ENCODE measurements at regions of chr5 and their contacts with region 1.

Region 1: GRCh38 chr5:56060271-56061110 is 65.7 kb upstream of the IL6ST start:
- DNase-seq: no peak
- ATAC-seq: no peak
- H3K4me3 ChIP-seq: no peak overlapping the region
- H3K27ac ChIP-seq: no peak overlapping the region
- H3K4me1 ChIP-seq: peaks cover 18% of the 10 kb centered on the region
- CTCF ChIP-seq: no peak
- EP300 ChIP-seq: no peak
- POLR2A ChIP-seq: no peak
- RAD21 ChIP-seq: no peak

Region 2: DNA sequence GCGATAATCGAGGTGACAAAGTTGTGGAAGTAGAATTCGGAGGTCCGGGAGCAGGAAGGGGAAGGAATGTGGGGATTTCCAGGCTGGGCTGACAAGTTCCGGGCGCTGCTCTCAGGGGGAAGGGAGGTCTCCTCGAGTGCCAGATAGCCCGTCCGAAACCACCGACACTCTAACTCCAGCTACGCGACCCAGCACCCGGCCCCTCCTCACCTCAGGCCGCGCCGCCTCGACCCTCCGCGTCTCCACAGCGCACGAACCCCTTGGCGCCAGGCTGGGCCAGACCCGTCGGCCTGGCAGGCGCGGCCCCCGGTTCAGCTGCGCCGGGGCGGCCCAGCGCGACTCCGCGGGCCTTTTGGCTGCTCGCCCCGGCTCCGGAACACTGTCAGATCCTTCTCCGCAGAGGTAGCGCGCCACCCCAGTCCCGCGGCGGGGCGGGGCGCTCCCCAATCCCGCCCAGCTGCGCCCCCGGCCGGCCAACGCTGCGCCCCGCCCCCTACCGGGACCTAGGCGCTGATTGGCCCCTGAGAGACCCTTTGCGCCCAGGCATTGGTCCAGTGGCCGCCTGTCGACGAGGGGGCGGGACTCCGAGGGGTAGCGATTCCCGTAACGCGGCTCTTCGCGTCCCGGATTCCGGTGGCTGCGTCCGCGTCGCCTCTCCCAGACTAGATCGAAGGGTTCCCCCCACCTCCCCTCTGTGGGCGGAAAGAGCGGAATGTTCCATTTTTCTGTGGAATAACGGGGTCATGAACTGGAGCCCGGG is 65.7 kb before region 1 on chr5 and contains the start of gene IL6ST:
- CTCF ChIA-PET with region 1: no interaction called
- POLR2A ChIA-PET with region 1: interaction called, 11 read pairs
- DNase-seq: peak; percentile 96 to 97
- ATAC-seq: peak; percentile 95
- H3K4me3 ChIP-seq: peak within 1 kb of the TSS; percentile 80
- H3K27ac ChIP-seq: peak within 1 kb of the TSS; percentile 93 to 94
- H3K4me1 ChIP-seq: peaks cover 45% of the 10 kb centered on the region
- CTCF ChIP-seq: no peak
- EP300 ChIP-seq: no peak
- POLR2A ChIP-seq: peak; percentile 50
- RAD21 ChIP-seq: peak in 1 of 2 experiments; percentile 11; a peak in 2 of 5 replicates
- polyA plus RNA-seq, gene IL6ST: 183 and 198 TPM in 2 replicates

Measured in A549 (cell line).